Activated CD8-positive, alpha-beta T cell treated with anti-CD3 and anti-CD28 coated beads for 36 hours (primary cell): ENCODE measurements at regions of chr4 and their contacts with region 1.

Region 1: DNA sequence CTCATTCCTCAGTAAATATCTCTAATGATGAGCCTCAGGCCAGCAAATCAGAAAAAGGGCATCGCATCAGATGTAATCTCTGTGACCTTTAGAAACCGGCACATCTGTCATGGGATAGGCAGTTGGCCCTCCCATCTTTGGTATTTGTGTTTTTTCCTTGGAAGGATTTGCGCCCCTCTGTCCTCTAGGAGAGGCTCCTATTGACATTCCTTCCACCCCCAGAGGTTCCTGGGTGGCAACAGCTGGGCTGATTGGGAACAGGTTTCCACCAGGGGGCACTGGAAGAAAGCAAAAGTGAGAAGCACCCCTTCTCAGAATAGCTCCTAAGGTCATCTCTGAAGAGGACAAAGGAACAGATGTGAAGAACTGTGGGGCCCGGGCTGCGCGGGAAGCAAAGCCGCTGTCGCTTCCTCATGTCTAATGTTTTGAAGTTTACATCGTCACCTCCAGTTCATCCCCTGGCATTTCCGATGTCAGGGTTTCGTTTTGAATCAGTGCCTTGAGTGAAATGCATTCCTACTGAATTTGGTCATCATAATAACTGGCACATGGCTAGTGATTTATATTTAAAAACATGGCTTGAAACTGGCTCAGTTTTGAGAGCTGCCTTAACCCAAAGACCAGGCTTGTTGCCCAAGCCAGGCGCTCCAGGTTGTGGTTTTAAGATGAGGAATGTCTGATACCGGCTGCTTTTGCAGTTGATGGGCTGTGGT is 6.2 kb downstream of the TXK start:
- DNase-seq: peak; percentile 96
- ATAC-seq: peak; percentile 66
- H3K4me3 Mint-ChIP-seq: peak overlapping the region; percentile 90
- H3K27ac Mint-ChIP-seq: peak overlapping the region; percentile 99
- H3K4me1 Mint-ChIP-seq: peaks cover 89% of the 10 kb centered on the region
- H3K27me3 Mint-ChIP-seq: no peaks in the 10 kb centered on the region
- CTCF ChIP-seq: peak; percentile 63

Region 2: GRCh38 chr4:48116582-48116981 is 11.3 kb before region 1 on chr4:
- CTCF ChIA-PET with region 1: interaction called, 39 read pairs
- POLR2A ChIA-PET with region 1: interaction called, 23 read pairs
- intact Hi-C with region 1: no loop called
- DNase-seq: no peak
- ATAC-seq: peak; percentile 34
- H3K4me3 Mint-ChIP-seq: no peak overlapping the region
- H3K27ac Mint-ChIP-seq: peak overlapping the region; percentile 53
- H3K4me1 Mint-ChIP-seq: peaks cover 69% of the 10 kb centered on the region
- H3K27me3 Mint-ChIP-seq: no peaks in the 10 kb centered on the region
- CTCF ChIP-seq: no peak

Region 3: GRCh38 chr4:48269861-48270522 is 142.2 kb after region 1 on chr4:
- CTCF ChIA-PET with region 1: interaction called, 8 read pairs
- POLR2A ChIA-PET with region 1: interaction called, 3 read pairs
- intact Hi-C with region 1: loop called (anchors 5 kb)
- DNase-seq: peak; percentile 96
- ATAC-seq: peak; percentile 95
- H3K4me3 Mint-ChIP-seq: peak overlapping the region; percentile 88
- H3K27ac Mint-ChIP-seq: peak overlapping the region; percentile 90
- H3K4me1 Mint-ChIP-seq: peaks cover 15% of the 10 kb centered on the region
- H3K27me3 Mint-ChIP-seq: no peaks in the 10 kb centered on the region
- CTCF ChIP-seq: no peak